ENCODE measurements at regions of chr7 and their contacts with region 1.

Region 1: GRCh38 chr7:157013602-157014549 is 3.4 kb upstream of the MNX1 start:
- DNase-seq: no peak
- H3K4me3 ChIP-seq: no peak overlapping the region
- H3K27ac ChIP-seq: no peak overlapping the region
- H3K4me1 ChIP-seq: peaks cover 0 to 10% of the 10 kb centered on the region in 2 donors
- H3K27me3 ChIP-seq: peaks cover 5 to 91% of the 10 kb centered on the region in 2 donors
- CTCF ChIP-seq: no peak
- POLR2A ChIP-seq: no peak

Region 2: GRCh38 chr7:156918635-156919034 is 95.2 kb before region 1 on chr7:
- intact Hi-C with region 1: no loop called
- DNase-seq: no peak
- H3K4me3 ChIP-seq: no peak overlapping the region
- H3K27ac ChIP-seq: no peak overlapping the region
- H3K4me1 ChIP-seq: no peaks in the 10 kb centered on the region
- H3K27me3 ChIP-seq: no peaks in the 10 kb centered on the region
- CTCF ChIP-seq: no peak
- POLR2A ChIP-seq: no peak

Region 3: GRCh38 chr7:156949541-156950380 is 64.1 kb before region 1 on chr7 and contains the start of gene NOM1:
- intact Hi-C with region 1: no loop called
- DNase-seq: peak; percentile 66 to 86
- H3K4me3 ChIP-seq: peak within 1 kb of the TSS; percentile 84 to 99 (median 97)
- H3K27ac ChIP-seq: no peak within 1 kb of the TSS
- H3K4me1 ChIP-seq: peaks cover 0 to 13% of the 10 kb centered on the region in 2 donors
- H3K27me3 ChIP-seq: no peaks in the 10 kb centered on the region
- CTCF ChIP-seq: peak in 1 of 3 donors; percentile 98
- POLR2A ChIP-seq: no peak
- total RNA-seq, gene NOM1: 17.1 to 31.5 (median 25.2) TPM

Region 4: GRCh38 chr7:157000047-157000726 is 13.7 kb before region 1 on chr7:
- intact Hi-C with region 1: loop called (anchors 2 kb)
- DNase-seq: no peak
- H3K4me3 ChIP-seq: peak overlapping the region; percentile 37 to 74 (median 49)
- H3K27ac ChIP-seq: no peak overlapping the region
- H3K4me1 ChIP-seq: peaks cover 1 to 19% of the 10 kb centered on the region in 2 donors
- H3K27me3 ChIP-seq: peaks cover 8 to 79% of the 10 kb centered on the region in 2 donors
- CTCF ChIP-seq: no peak
- POLR2A ChIP-seq: no peak

Measured in breast epithelium (tissue), 4 donors.